RWPE1 (cell line): ENCODE measurements at regions of chr2 and their contacts with region 1.

Region 1: GRCh38 chr2:142280831-142281230 is 150.0 kb upstream of the LRP1B start:
- DNase-seq: no peak
- H3K27ac ChIP-seq: no peak overlapping the region
- CTCF ChIP-seq: no peak

Region 2: GRCh38 chr2:142140434-142140845 is 140.4 kb before region 1 on chr2:
- CTCF ChIA-PET with region 1: interaction called, 10 read pairs
- POLR2A ChIA-PET with region 1: no interaction called
- DNase-seq: no peak
- H3K27ac ChIP-seq: no peak overlapping the region
- CTCF ChIP-seq: peak; percentile 63; the same call in 1 of the 2 replicates